ENCODE measurements at regions of chr14 and their contacts with region 1.

Region 1: DNA sequence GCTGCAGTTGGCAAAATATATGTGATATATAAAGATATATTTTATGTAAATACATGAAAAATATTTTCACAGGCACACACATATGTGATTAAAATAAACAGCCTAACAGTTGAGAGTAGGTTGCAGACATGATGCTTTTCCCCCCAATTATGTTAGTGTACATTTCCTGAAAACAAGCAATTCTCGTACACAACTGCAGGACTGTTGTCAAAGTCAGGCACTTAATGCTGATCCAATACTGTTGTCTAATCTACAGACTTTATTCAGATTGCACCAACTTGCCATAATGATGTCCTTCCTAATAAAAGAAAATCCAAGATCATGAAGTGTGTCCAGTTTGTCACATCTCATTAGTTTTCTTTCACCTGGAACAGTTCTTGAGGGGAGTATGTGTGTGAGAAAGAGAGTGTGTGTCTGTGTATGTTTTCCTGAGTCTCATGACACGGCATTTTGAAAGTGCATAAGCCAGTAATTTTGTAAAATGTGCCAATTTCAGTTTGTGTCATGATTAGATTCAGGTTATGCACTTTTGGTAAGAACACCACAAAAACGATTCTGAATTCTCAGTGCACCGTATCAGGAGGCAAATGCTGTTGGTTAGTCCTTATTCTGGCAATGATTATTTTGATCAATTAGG is 16.5 kb upstream of the SEL1L start:
- DNase-seq: peak; percentile 10
- H3K4me3 Mint-ChIP-seq: no peak overlapping the region
- H3K27ac Mint-ChIP-seq: no peak overlapping the region
- H3K4me1 Mint-ChIP-seq: peaks cover 10% of the 10 kb centered on the region
- H3K27me3 Mint-ChIP-seq: peaks cover 14% of the 10 kb centered on the region

Region 2: GRCh38 chr14:81423504-81423903 is 126.6 kb before region 1 on chr14:
- CTCF ChIA-PET with region 1: no interaction called
- intact Hi-C with region 1: no loop called
- DNase-seq: no peak
- H3K4me3 Mint-ChIP-seq: no peak overlapping the region
- H3K27ac Mint-ChIP-seq: no peak overlapping the region
- H3K4me1 Mint-ChIP-seq: no peaks in the 10 kb centered on the region
- H3K27me3 Mint-ChIP-seq: peaks cover 20% of the 10 kb centered on the region

Region 3: DNA sequence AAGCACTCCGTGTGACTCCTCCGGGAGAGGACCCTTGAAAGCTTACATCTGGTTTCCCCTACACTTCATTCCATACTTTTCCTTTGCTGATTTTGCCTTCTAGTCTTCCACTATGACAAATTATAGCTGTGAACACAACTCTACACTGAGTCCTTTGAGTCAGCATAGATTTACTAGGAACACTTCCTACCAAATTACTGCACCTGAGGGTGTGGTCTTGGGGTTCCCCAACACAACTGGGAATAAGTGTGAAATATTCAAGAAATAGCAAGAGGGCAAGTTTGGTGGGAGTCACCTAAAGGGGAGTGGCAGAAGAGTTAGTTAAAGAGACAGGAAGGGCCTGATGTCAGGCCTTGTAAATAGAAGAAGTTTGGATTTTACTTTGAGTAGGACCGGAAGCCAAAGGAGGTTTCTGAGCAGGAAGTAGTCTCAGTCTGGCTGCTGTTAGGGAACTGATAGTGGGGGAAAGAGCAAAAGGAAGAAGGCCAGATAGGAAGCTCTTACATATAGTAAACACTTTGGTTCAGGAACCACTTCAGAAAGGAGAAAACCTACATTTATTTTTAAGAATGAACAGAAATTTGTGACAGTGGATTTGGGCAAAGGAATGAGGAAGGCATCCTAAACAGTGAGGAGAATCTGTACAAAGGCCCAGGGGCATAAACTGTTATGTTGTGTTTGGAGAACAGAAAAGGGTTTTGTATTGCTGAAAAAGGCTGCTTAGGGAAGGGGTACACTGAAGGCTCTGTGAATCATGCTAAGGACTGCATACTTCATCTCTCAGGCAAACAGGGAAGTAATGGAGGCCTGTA is 30.7 kb before region 1 on chr14:
- CTCF ChIA-PET with region 1: no interaction called
- intact Hi-C with region 1: loop called (anchors 1 kb)
- DNase-seq: peak; percentile 35
- H3K4me3 Mint-ChIP-seq: no peak overlapping the region
- H3K27ac Mint-ChIP-seq: peak overlapping the region; percentile 73
- H3K4me1 Mint-ChIP-seq: peaks cover 42% of the 10 kb centered on the region
- H3K27me3 Mint-ChIP-seq: no peaks in the 10 kb centered on the region

Region 4: DNA sequence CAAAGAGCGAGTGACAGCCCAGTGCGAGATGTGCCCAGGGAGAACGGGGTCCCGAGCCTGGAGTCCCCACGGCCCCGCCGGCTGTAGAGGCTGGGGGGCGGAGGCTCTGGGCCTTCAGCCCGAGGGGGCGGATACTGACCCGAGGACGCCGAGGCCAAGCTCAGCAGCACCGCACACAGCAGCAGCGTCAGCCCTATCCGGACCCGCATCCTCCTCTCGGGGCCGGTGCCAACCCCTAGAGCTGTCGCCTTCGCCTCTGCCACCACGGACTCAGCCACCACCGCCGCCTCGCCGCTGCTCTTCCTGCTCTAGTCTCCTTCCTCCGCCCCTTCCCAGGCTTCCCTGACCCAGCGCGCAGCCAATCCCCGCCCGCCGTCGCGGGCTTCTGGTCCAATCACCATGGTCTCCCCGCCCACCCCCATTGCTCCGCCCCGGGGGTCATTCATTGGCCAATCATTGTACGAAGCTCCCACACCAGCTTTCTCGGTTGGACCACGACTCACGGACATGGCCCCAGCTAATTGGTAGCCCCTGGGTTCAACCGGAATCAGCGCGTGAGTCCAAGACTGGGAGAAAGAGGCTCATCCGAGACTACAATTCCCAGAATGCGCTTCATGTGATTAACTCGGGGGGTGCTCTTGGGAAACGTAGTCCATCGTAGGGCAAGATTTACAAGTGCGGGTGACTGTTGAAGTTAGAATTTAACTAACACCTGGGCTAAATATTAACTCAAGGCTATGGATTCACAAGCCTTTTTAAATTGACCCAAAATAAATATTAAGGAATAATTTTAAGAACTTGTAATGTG is 16.4 kb before region 1 on chr14 and contains the start of gene SEL1L:
- CTCF ChIA-PET with region 1: no interaction called
- intact Hi-C with region 1: loop called (anchors 1 kb)
- DNase-seq: peak; percentile 100
- H3K4me3 Mint-ChIP-seq: peak within 1 kb of the TSS; percentile 88
- H3K27ac Mint-ChIP-seq: peak within 1 kb of the TSS; percentile 79
- H3K4me1 Mint-ChIP-seq: peaks cover 52% of the 10 kb centered on the region
- H3K27me3 Mint-ChIP-seq: no peaks in the 10 kb centered on the region
- total RNA-seq, gene SEL1L: 40.5 to 41.2 TPM

Region 5: GRCh38 chr14:81561084-81561775 is 11.1 kb after region 1 on chr14:
- CTCF ChIA-PET with region 1: no interaction called
- intact Hi-C with region 1: no loop called
- DNase-seq: no peak
- H3K4me3 Mint-ChIP-seq: no peak overlapping the region
- H3K27ac Mint-ChIP-seq: no peak overlapping the region
- H3K4me1 Mint-ChIP-seq: no peaks in the 10 kb centered on the region
- H3K27me3 Mint-ChIP-seq: peaks cover 4% of the 10 kb centered on the region

Region 6: DNA sequence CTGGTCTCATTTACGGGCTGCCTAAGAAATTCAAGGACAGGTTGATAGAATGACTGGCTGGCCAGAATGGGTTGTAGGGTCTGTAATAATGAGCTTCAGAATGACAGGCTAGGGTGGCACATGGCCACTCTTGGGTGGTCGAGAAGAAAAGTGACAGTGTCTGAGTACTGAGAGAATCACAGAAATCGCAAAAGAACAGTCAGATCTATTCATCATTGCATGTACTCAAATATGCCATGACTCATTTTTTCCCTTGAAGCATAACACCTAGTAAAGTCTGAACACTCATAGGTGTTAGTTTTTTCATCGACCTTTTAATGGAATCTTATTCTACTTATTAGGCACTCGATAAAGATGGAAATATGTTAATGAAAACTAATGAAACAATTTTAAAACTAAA is 21.3 kb after region 1 on chr14:
- CTCF ChIA-PET with region 1: no interaction called
- intact Hi-C with region 1: loop called (anchors 2 kb)
- DNase-seq: no peak
- H3K4me3 Mint-ChIP-seq: no peak overlapping the region
- H3K27ac Mint-ChIP-seq: no peak overlapping the region
- H3K4me1 Mint-ChIP-seq: peaks cover 2% of the 10 kb centered on the region
- H3K27me3 Mint-ChIP-seq: peaks cover 13% of the 10 kb centered on the region